ENCODE measurements at regions of chr1 and their contacts with region 1.

Region 1: DNA sequence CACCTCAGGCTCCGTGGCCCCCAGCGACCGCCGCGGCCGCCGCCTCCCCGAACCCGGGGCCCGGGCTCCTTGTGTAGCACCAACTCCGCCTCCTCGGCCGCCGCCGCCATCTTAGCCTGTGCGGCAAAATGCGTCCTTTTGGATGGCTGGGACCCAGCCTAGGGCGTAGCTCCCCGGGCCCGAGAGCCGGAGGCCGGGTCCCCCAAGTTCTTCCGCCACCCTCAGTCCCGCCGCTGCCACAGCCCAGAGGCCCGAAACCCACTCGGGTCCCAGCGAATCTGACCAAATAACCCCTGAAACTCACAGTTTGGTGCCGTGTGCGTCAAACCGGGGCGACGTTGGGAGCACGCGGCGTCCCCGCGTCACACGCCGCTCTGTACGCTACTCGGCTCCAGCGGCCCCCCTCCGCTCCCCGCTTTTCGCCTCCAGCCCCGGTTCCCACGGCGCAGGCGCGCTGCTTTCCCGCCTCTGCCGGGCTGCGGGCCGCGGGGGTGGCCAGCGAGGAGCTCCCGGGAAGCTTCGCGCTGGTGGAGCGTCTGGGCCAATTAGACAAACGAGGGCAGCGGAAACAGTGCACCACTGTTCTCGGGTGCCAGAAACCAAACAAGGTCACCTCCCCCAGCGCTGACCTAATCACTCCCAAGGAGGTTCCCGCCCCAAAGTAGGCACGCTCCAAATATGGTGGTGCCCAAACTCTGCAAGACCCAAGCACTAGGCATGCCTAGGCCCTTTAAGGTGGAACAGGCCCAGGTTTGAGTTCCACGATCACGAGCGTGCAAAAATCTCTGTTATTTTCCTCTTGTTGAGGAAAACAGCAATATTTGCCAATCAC is at the start of gene ZNF644:
- DNase-seq: peak; percentile 84 to 96
- ATAC-seq: peak; percentile 79 to 91 (median 79)
- H3K4me3 ChIP-seq: peak within 1 kb of the TSS; percentile 99
- H3K4me3 Mint-ChIP-seq: peak within 1 kb of the TSS; percentile 92
- H3K27ac ChIP-seq: peak within 1 kb of the TSS; percentile 100
- H3K27ac Mint-ChIP-seq: peak within 1 kb of the TSS; percentile 94 to 97
- H3K4me1 ChIP-seq: peaks cover 20% of the 10 kb centered on the region
- H3K4me1 Mint-ChIP-seq: peaks cover 39 to 48% of the 10 kb centered on the region in 2 donors
- H3K27me3 ChIP-seq: no peaks in the 10 kb centered on the region
- H3K27me3 Mint-ChIP-seq: no peaks in the 10 kb centered on the region
- CTCF ChIP-seq: no peak
- total RNA-seq, gene ZNF644: 135 to 157 (median 142) TPM

Region 2: DNA sequence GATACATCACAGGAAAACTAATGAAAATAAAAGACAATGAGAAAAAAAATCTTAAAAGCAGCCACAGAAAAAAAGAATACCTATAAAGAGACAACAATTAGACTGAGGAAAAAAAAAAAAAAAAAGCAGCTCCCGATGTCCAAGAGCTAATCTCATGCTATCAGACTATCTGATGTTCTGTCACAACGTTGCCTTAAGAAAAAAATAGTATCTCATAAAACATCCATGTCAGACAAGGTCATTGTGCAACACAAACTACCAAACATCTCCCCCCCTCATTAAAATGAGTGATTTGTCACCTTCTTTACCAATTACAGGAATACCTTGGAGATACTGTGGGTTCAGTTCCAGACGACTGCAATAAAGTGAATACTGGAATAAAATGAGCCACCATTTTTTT is 69.0 kb before region 1 on chr1:
- intact Hi-C with region 1: no loop called
- DNase-seq: no peak
- ATAC-seq: no peak
- H3K4me3 ChIP-seq: no peak overlapping the region
- H3K4me3 Mint-ChIP-seq: no peak overlapping the region
- H3K27ac ChIP-seq: no peak overlapping the region
- H3K27ac Mint-ChIP-seq: no peak overlapping the region
- H3K4me1 ChIP-seq: no peaks in the 10 kb centered on the region
- H3K4me1 Mint-ChIP-seq: peaks cover 63 to 64% of the 10 kb centered on the region in 2 donors
- H3K27me3 ChIP-seq: no peaks in the 10 kb centered on the region
- H3K27me3 Mint-ChIP-seq: no peaks in the 10 kb centered on the region
- CTCF ChIP-seq: no peak

Region 3: DNA sequence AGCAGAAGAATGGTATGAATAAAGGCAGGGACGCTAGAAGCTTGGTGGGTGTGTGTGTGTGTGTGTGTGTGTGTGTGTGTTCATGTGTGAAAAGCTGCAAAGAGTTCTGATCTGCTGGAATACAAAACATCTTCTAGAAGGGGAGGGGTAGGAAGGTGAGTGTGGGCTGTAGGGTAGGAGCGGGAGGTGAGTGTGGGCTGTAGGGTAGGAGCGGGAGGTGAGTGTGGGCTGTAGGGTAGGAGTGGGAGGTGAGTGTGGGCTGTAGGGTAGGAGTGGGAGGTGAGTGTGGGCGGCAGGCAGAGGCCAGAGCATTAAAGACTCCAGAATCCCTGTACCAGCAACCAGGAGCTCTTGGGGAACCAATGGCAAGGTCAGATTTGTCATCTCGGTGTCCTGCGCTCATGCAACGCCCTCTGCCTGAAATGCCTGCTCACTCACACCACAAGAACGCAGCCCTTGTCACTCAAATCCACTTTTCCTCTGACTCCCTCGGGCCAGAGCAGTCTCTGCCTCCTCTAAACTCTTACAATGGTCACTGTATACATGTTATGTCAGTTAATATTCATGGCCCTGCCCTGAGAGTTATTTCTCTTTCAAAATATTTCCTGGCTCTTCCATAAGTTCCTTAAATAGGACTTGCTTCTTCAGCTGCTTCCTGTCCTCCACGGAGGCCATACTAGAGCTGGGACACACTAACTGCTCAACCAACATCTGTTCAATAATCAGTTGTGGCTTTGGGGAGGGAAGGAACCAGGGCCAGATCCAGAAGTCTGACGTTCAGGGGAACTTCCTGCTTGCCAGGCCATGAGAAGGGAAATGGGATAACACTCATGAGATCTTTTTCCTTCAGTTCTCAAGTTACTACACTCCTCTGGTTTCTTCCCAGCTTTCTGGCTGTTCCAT is 53.6 kb after region 1 on chr1:
- intact Hi-C with region 1: no loop called
- DNase-seq: no peak
- ATAC-seq: peak in 1 of 3 donors; percentile 17
- H3K4me3 ChIP-seq: no peak overlapping the region
- H3K4me3 Mint-ChIP-seq: no peak overlapping the region
- H3K27ac ChIP-seq: no peak overlapping the region
- H3K27ac Mint-ChIP-seq: no peak overlapping the region
- H3K4me1 ChIP-seq: no peaks in the 10 kb centered on the region
- H3K4me1 Mint-ChIP-seq: peaks cover 0 to 5% of the 10 kb centered on the region in 2 donors
- H3K27me3 ChIP-seq: no peaks in the 10 kb centered on the region
- H3K27me3 Mint-ChIP-seq: peaks cover 6 to 10% of the 10 kb centered on the region in 2 donors
- CTCF ChIP-seq: no peak

Region 4: DNA sequence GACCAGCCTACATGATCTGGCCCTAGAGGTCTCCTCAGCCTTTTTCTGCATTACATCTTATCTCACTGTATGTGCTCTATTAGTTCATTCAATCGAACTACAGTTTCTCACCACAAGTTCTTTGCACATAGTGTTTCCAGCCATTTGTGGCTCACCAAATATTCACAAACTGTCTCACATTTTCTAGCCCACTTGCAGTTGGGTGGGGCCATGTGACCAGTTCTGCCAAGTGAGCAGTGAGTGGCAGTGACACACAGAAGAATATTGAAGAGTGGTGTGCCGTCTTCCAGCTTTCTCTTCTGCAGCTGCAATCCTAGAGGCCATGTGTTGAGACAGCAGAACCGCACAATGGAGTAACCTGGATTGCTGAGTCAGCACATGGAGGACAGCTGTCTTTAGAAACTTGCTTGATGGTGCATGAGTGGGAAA is 103.1 kb after region 1 on chr1:
- intact Hi-C with region 1: loop called (anchors 2 kb)
- DNase-seq: peak; percentile 32 to 54
- ATAC-seq: peak; percentile 82 to 94 (median 84)
- H3K4me3 ChIP-seq: no peak overlapping the region
- H3K4me3 Mint-ChIP-seq: peak overlapping the region; percentile 1
- H3K27ac ChIP-seq: no peak overlapping the region
- H3K27ac Mint-ChIP-seq: peak overlapping the region in 1 of 2 donors; percentile 31
- H3K4me1 ChIP-seq: peaks cover 16% of the 10 kb centered on the region
- H3K4me1 Mint-ChIP-seq: peaks cover 23 to 24% of the 10 kb centered on the region in 2 donors
- H3K27me3 ChIP-seq: peaks cover 2% of the 10 kb centered on the region
- H3K27me3 Mint-ChIP-seq: peaks cover 20 to 63% of the 10 kb centered on the region in 2 donors
- CTCF ChIP-seq: no peak